Mammary epithelial cell (primary cell): ENCODE measurements at regions of chr17 and their contacts with region 1.

Region 1: DNA sequence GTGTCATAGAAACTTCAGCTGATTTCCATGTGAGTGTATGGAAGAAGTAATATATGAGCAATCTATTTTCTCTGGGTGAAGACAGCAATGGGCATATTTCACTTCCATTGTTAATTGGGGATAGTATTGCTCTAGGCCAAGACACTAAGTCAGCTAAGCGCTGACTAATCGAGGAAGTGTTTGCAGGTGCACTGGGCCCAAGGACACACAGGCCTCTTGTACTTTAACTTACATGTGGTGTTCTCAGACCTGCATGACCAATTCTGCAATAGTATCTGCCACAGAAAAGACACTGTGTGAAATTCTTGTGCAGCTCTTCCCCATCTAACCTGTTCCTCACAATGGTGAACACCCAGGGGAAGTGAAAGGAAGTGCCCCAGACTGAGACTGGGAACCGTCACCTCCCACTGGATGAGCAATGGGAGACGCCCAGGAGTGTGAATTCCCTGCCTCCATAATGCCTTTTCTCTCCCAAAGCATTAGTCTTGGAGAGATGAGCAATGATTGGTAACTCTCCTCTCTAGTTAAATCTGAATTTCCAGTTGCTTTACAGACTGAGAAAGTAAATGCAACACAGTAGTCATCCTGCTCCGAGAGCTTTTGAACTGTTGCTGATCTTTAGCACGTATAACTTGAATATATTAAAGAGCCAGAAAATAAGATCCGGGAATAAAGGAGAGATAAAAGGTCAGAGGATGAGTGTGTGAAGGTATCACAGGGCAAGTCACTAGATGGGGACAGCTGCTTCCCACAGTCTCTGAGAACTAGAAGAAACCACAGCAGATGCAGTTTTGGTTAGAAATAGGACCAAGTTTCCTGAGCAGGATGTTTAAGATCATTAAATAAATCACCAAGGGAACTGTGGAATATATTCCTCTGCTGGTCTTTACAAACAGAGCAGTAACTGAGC is 82.6 kb downstream of the CDK5R1 start:
- DNase-seq: peak; percentile 99
- H3K4me3 ChIP-seq: no peak overlapping the region
- H3K27ac ChIP-seq: peak overlapping the region; percentile 90
- H3K4me1 ChIP-seq: peaks cover 40% of the 10 kb centered on the region
- H3K27me3 ChIP-seq: no peaks in the 10 kb centered on the region
- CTCF ChIP-seq: no peak

Region 2: GRCh38 chr17:32519228-32520103 is 50.0 kb before region 1 on chr17:
- CTCF ChIA-PET with region 1: interaction called, 24 read pairs
- dilution Hi-C with region 1: no loop called
- in situ Hi-C with region 1: no loop called
- intact Hi-C with region 1: no loop called
- DNase-seq: peak; percentile 69
- H3K4me3 ChIP-seq: peak overlapping the region in 2 of 3 experiments; percentile 48 to 58
- H3K27ac ChIP-seq: peak overlapping the region; percentile 20
- H3K4me1 ChIP-seq: peaks cover 13% of the 10 kb centered on the region
- H3K27me3 ChIP-seq: no peaks in the 10 kb centered on the region
- CTCF ChIP-seq: no peak

Region 3: DNA sequence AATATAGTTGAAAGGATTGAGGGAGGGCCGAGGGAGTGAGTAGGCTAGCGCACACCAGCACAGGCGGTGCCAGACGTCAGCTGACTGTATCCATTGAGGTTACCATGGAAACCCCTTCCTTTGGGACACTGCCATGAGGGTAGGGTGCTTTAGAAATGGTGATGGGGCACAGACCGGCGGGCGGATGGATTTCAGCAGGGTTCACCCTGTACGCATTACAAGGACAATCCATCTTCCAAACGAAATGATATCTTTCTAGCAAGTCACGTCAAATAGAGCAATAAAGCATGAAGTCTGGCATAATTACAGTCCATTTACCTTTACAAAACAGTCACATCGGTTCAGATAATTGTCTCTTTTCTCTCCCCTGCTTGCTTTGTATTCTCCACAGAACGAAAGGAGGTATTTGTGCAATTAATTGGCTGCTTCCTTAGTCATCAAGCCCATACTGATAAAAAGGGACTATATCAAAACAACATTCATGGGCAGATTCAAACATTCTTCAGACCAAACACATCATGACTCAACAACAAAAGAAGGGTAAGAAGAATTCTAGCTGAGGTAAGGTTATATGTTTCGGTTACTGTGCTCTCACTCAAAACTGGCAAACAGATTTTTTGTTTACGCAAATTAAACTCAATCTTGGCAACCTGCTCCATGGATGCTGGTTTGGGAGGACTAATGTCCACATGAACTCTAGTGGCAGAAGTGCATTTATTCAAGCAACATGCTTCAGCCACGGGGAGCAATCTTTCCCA is 58.0 kb after region 1 on chr17:
- CTCF ChIA-PET with region 1: no interaction called
- dilution Hi-C with region 1: no loop called
- in situ Hi-C with region 1: no loop called
- intact Hi-C with region 1: no loop called
- DNase-seq: no peak
- H3K4me3 ChIP-seq: no peak overlapping the region
- H3K27ac ChIP-seq: no peak overlapping the region
- H3K4me1 ChIP-seq: no peaks in the 10 kb centered on the region
- H3K27me3 ChIP-seq: no peaks in the 10 kb centered on the region
- CTCF ChIP-seq: no peak

Region 4: GRCh38 chr17:32693194-32693897 is 123.9 kb after region 1 on chr17:
- CTCF ChIA-PET with region 1: no interaction called
- dilution Hi-C with region 1: no loop called
- in situ Hi-C with region 1: no loop called
- intact Hi-C with region 1: no loop called
- DNase-seq: no peak
- H3K4me3 ChIP-seq: no peak overlapping the region
- H3K27ac ChIP-seq: no peak overlapping the region
- H3K4me1 ChIP-seq: no peaks in the 10 kb centered on the region
- H3K27me3 ChIP-seq: no peaks in the 10 kb centered on the region
- CTCF ChIP-seq: no peak